ENCODE measurements at regions of chr18 and their contacts with region 1.

Region 1: GRCh38 chr18:8351161-8351560 is 258.1 kb upstream of the RAB12 start:
- DNase-seq: no peak

Region 2: DNA sequence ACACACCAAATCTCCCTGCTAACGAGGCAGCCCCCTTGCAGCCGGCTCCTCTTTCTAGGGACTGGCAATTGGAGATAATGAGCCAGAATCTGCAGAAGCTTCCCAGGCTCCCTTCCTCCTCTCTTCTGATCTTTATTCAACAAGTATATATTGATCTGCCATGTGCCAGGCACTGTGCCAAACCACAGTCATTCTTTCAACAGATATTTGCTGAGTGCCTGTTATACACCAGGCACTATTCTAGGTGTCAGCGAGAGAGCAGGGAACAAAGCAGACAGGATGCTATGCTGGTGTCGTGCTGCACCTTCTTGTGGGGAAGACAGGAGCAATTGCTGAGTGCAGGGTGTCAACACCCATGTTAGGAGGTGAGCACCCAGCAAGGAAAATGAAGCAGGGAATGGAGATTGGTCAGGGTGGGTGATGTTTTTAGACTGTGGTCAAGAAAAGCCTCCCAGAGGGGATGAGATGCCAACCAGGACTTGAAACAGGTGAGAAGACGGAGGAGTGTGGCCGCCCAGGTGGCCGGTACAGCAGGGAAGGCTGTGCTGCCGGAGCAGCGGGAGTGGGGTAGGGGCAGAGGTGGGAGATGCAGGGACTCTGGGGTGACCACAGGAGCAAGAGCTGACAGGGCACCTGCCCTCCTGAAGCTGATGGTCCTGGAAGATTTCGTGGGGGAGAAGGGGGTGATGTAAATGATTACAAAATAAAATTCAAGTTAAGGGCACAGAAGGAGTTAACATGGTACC is 49.6 kb before region 1 on chr18:
- intact Hi-C with region 1: loop called (anchors 5 kb)
- DNase-seq: no peak